OCI-LY7 (cell line): ENCODE measurements at regions of chr5 and their contacts with region 1.

Region 1: DNA sequence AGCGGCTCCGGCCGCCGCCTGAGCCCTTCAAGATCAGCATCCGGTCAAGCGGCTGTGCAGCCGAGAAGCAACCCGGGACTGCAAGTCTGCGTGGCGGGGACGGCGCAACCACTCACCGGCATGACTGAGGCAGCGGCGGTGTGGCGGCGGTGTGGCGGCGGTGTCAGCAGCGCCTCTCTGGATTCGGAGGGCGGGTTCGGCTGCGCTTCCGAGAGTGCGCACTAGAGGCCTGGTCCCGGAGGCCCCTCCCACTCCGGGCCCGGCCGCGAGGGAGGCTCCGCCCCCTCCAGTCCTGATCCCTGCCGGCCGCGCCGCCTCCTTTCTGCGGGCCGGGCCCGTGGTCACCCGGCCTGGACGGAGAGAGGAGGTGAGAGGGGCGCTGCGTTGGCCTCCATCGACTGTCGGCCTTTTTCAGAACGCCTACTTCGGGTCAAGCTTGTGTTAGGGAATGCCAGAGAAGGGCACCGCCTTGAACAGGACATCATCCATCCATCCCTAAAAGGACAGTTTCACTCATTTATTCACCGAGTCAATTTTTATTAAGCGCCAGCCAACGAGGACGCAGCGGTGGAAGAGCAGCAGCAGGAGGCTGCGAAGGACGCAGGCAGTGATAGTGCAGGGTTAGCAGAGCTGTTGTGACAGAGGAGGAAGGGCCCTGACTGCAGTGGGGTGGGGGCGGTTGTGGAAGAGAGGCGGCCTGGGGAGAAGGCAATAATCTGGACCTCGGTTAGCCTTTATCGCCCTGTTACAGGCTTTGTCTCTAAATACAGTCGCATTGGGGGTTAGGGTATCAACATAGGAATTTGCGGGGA is at the start of gene ATOX1:
- DNase-seq: peak; percentile 93
- H3K4me3 ChIP-seq: peak within 1 kb of the TSS; percentile 87
- H3K27ac ChIP-seq: no peak within 1 kb of the TSS
- H3K4me1 ChIP-seq: peaks cover 26% of the 10 kb centered on the region
- CTCF ChIP-seq: no peak; the same call in 1 of the 2 replicates
- total RNA-seq, gene ATOX1: 58.2 and 71.0 TPM in 2 replicates

Region 2: GRCh38 chr5:151016700-151017099 is 741.9 kb before region 1 on chr5:
- CTCF ChIA-PET with region 1: no interaction called
- POLR2A ChIA-PET with region 1: no interaction called
- intact Hi-C with region 1: no loop called
- DNase-seq: no peak
- H3K4me3 ChIP-seq: no peak overlapping the region
- H3K27ac ChIP-seq: no peak overlapping the region
- H3K4me1 ChIP-seq: no peaks in the 10 kb centered on the region
- CTCF ChIP-seq: no peak

Region 3: DNA sequence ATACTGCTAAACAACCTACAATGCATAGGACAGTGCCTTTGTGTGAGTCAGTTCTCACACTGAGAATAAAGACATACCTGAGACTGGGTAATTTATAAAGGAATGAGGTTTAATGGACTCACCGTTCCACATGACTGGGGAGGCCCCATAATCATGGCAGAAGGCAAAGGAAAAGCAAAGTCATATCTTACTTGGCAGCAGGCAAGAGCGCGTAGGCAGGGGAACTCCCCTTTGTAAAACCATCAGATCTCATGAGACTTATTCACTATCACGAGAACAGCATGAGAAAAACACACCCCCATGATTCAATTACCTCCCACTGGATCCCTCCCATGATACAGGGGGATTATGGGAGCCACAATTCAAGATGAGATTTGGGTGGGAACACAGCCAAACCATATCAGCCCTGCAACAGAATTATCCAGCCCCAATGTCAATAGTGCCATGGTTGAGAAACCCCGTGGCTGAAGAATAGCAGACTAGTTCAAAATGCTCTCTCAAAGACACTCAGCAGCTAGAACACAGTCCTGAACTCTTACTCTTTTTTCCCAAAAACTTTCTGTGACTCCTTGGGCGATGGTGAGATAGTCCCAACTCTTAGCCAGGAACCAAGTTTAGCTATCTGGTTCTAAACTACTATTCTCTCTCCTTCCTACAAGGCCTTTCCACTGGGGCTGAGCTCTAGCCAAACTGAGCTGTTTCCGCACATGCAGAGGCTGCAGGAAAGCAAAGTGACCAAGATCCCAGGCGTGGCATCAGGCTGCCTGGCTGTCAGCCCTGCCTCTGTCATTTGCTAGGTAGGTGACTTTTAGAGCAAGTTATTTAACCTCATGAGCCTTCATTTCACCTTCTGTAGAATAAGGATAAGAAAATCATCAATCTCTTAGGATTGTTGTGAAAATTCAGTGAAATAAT is 189.2 kb before region 1 on chr5:
- CTCF ChIA-PET with region 1: no interaction called
- POLR2A ChIA-PET with region 1: no interaction called
- intact Hi-C with region 1: no loop called
- DNase-seq: no peak
- H3K4me3 ChIP-seq: no peak overlapping the region
- H3K27ac ChIP-seq: no peak overlapping the region
- H3K4me1 ChIP-seq: no peaks in the 10 kb centered on the region
- CTCF ChIP-seq: no peak

Region 4: GRCh38 chr5:151771259-151772028 is 12.8 kb after region 1 on chr5 and contains the start of gene G3BP1:
- CTCF ChIA-PET with region 1: interaction called, 3 read pairs
- POLR2A ChIA-PET with region 1: interaction called, 69 read pairs
- intact Hi-C with region 1: no loop called
- DNase-seq: peak; percentile 100
- H3K4me3 ChIP-seq: peak within 1 kb of the TSS; percentile 91
- H3K27ac ChIP-seq: peak within 1 kb of the TSS; percentile 87
- H3K4me1 ChIP-seq: peaks cover 37% of the 10 kb centered on the region
- CTCF ChIP-seq: no peak; the same call in 1 of the 2 replicates
- total RNA-seq, gene G3BP1: 163 and 178 TPM in 2 replicates